Heart right ventricle (tissue), 16 donors: ENCODE measurements at regions of chr5 and their contacts with region 1.

Region 1: GRCh38 chr5:69334793-69335268 is 2.2 kb upstream of the CCDC125 start:
- DNase-seq: peak; percentile 85
- ATAC-seq: peak; percentile 70 to 92 (median 88)
- H3K4me3 ChIP-seq: peak overlapping the region in 5 of 10 donors; percentile 14 to 27 (median 20)
- H3K27ac ChIP-seq: peak overlapping the region in 5 of 10 donors; percentile 5 to 58 (median 43)
- H3K4me1 ChIP-seq: peaks cover 0 to 32% (median 12%) of the 10 kb centered on the region in 9 donors
- H3K27me3 ChIP-seq: no peaks in the 10 kb centered on the region
- CTCF ChIP-seq: peak; percentile 69 to 85 (median 76)

Region 2: GRCh38 chr5:69048230-69048629 is 286.6 kb before region 1 on chr5:
- intact Hi-C with region 1: loop called in 8 of 10 experiments (anchors 2 to 10 kb)
- DNase-seq: no peak
- ATAC-seq: no peak
- H3K4me3 ChIP-seq: no peak overlapping the region
- H3K27ac ChIP-seq: no peak overlapping the region
- H3K4me1 ChIP-seq: peaks cover 0 to 6% (median 0%) of the 10 kb centered on the region in 9 donors
- H3K27me3 ChIP-seq: no peaks in the 10 kb centered on the region
- CTCF ChIP-seq: peak in 4 of 9 donors; percentile 16 to 33 (median 28)

Region 3: DNA sequence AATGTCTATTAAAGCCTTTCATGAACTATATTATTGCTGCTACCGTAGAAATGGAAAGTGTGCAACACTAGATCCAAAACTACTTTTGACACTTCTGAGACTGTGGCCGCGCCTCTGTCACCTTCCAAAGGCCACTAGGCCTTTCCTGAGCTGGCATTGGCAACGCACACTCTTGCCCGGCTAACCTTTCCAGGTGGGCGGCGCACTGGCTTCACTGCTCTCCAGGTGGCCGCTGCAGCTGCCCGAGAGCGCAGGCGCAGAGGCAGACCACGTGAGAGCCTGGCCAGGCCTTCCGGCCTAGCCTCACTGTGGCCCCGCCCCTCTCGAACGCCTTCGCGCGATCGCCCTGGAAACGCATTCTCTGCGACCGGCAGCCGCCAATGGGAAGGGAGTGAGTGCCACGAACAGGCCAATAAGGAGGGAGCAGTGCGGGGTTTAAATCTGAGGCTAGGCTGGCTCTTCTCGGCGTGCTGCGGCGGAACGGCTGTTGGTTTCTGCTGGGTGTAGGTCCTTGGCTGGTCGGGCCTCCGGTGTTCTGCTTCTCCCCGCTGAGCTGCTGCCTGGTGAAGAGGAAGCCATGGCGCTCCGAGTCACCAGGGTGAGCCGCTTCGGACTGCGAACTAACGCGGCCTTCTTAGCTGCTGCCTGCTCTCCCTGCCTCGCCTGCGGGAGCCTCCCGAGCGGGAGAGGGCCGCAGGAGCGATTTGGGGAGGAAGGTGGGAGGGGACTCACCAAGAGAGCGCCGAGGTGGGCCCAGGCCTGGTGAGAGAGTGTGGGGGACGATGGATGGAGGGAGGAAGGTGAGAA is 167.9 kb before region 1 on chr5 and contains the start of gene CCNB1:
- intact Hi-C with region 1: loop called in 2 of 10 experiments (anchors 5 to 10 kb)
- DNase-seq: peak; percentile 97 to 98
- ATAC-seq: peak; percentile 100
- H3K4me3 ChIP-seq: peak within 1 kb of the TSS; percentile 47 to 82 (median 68)
- H3K27ac ChIP-seq: peak within 1 kb of the TSS in 6 of 10 donors; percentile 23 to 67 (median 48)
- H3K4me1 ChIP-seq: peaks cover 3 to 24% (median 10%) of the 10 kb centered on the region in 9 donors
- H3K27me3 ChIP-seq: no peaks in the 10 kb centered on the region
- CTCF ChIP-seq: peak in 1 of 9 donors; percentile 28
- total RNA-seq, gene CCNB1: 2.2 to 17.6 (median 3.7) TPM

Region 4: DNA sequence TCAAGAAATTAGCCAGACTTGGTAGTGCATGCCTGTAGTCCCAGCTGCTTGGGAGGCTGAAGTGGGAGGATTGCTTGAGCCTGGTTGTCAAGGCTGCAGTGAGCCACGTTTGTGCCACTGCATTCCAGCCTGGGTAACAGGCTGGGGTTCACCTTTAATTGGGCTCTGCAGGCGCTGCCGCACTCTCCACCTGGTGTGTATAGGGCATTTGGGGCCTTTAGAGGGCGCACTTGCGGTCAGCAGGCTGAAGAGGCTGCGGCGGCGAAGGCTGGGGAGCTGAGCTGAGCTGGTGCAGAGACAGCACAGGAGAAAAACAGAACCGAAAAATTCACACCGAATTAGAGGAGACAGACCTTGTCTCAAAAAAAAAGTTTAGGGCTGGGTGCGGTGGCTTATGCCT is 68.9 kb before region 1 on chr5:
- intact Hi-C with region 1: loop called in 1 of 10 experiments (anchors 10 kb)
- DNase-seq: no peak
- ATAC-seq: no peak
- H3K4me3 ChIP-seq: no peak overlapping the region
- H3K27ac ChIP-seq: no peak overlapping the region
- H3K4me1 ChIP-seq: peaks cover 0 to 1% (median 0%) of the 10 kb centered on the region in 9 donors
- H3K27me3 ChIP-seq: no peaks in the 10 kb centered on the region
- CTCF ChIP-seq: peak in 2 of 9 donors; percentile 21 to 28